Activated CD4-positive, alpha-beta memory T cell treated with anti-CD3 and anti-CD28 coated beads for 36 hours (primary cell): ENCODE measurements at regions of chr11 and their contacts with region 1.

Region 1: GRCh38 chr11:32829680-32830412 is at the start of gene PRRG4:
- DNase-seq: peak; percentile 67
- H3K4me3 Mint-ChIP-seq: peak within 1 kb of the TSS; percentile 83
- H3K27ac Mint-ChIP-seq: no peak within 1 kb of the TSS
- H3K4me1 Mint-ChIP-seq: peaks cover 12% of the 10 kb centered on the region
- H3K27me3 Mint-ChIP-seq: peaks cover 22% of the 10 kb centered on the region
- total RNA-seq, gene PRRG4: 0.24 to 0.43 TPM

Region 2: DNA sequence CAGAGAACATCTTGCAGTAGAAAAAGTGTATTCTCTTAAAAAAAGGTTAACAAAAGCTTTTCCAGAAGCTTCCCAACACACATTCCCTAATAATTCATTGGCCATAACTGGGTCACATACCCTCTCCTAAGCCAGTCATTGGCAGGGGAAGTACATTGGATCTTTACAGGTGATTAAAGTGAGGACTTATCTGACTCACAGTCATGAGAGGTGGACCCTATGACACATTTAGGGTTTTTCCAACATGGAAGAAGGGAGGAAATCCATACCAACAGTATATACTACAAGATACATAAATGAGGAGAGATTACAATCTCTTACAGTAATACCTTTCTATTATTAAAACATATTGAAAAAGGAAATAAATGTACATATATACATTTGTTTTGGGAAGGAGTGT is 107.6 kb before region 1 on chr11:
- CTCF ChIA-PET with region 1: no interaction called
- POLR2A ChIA-PET with region 1: no interaction called
- intact Hi-C with region 1: no loop called
- DNase-seq: no peak
- H3K4me3 Mint-ChIP-seq: no peak overlapping the region
- H3K27ac Mint-ChIP-seq: no peak overlapping the region
- H3K4me1 Mint-ChIP-seq: no peaks in the 10 kb centered on the region
- H3K27me3 Mint-ChIP-seq: peaks cover 5% of the 10 kb centered on the region

Region 3: GRCh38 chr11:32893343-32894148 is 63.7 kb after region 1 on chr11:
- CTCF ChIA-PET with region 1: interaction called, 3 read pairs
- POLR2A ChIA-PET with region 1: no interaction called
- intact Hi-C with region 1: loop called (anchors 5 kb)
- DNase-seq: peak; percentile 68
- H3K4me3 Mint-ChIP-seq: peak overlapping the region; percentile 97
- H3K27ac Mint-ChIP-seq: peak overlapping the region; percentile 90
- H3K4me1 Mint-ChIP-seq: peaks cover 32% of the 10 kb centered on the region
- H3K27me3 Mint-ChIP-seq: no peaks in the 10 kb centered on the region